ENCODE measurements at regions of chr7 and their contacts with region 1.

Region 1: DNA sequence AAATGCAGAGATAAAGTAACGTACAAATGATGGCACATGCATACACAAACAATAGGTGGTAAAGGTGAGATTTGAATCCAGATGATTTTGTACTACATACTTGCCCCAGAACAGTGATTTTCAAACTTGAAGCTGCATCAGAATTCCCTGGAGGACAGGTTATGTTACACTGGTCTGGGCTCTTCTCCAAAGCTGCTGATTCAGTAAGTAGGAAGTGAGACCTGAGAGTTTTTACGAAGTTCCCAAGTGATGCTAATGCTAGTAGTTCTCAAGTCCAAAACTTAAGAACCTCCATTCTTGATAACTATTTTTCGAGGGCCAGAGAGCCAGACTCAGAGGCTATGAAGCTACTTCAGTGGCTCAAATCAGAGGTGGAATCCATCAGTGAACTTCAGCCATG is 159.0 kb upstream of the POM121L12 start:
- DNase-seq: no peak
- ATAC-seq: no peak
- H3K4me3 ChIP-seq: no peak overlapping the region
- H3K27ac ChIP-seq: no peak overlapping the region
- H3K4me1 ChIP-seq: no peaks in the 10 kb centered on the region
- H3K27me3 ChIP-seq: no peaks in the 10 kb centered on the region
- CTCF ChIP-seq: no peak

Region 2: GRCh38 chr7:52826515-52827265 is 49.7 kb before region 1 on chr7:
- intact Hi-C with region 1: loop called in 1 of 10 experiments (anchors 5 kb)
- DNase-seq: no peak
- ATAC-seq: no peak
- H3K4me3 ChIP-seq: no peak overlapping the region
- H3K27ac ChIP-seq: no peak overlapping the region
- H3K4me1 ChIP-seq: no peaks in the 10 kb centered on the region
- H3K27me3 ChIP-seq: no peaks in the 10 kb centered on the region
- CTCF ChIP-seq: no peak

Region 3: GRCh38 chr7:53947732-53948131 is 1071.3 kb after region 1 on chr7:
- intact Hi-C with region 1: no loop called
- DNase-seq: no peak
- ATAC-seq: peak in 1 of 8 donors; percentile 61
- H3K4me3 ChIP-seq: no peak overlapping the region
- H3K27ac ChIP-seq: no peak overlapping the region
- H3K4me1 ChIP-seq: no peaks in the 10 kb centered on the region
- H3K27me3 ChIP-seq: no peaks in the 10 kb centered on the region
- CTCF ChIP-seq: no peak

Measured in heart right ventricle (tissue), 16 donors.